Adrenal gland (tissue), 19 donors: ENCODE measurements at regions of chr1 and their contacts with region 1.

Region 1: DNA sequence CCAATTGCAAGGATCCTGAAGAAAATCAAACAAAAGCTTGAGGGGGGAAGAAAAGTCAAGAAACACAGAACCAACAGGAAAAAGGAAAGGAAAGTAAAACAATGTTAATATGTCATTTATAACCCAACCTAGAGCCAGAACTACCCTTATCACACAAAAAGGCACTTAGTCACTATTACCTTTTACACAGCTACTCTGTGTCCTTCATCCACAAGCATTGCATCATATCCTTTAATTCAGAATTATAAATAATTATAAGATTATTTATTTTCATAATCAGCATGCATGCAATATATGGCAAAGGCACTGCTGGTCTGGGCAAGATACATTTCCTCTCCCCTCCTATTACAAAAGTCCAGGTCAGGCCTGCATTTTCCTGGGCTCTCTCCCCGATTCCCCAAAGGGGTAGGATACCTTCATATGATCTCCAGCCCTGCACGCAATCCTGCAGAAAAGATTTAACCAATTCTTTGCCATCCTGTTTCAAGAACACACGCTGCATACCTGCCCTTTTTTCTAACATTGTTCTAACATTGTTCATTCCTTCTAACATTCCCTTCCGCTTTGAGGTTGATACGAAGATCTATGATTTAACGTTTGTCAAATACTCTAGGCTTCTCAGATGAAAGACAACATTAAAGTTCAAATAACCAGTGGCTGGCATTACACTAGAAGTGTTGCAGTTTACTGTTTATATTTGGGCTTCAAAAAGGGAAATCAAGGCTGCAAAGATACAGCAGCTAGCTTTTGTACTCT is 4.3 kb downstream of the PTPN14 start:
- DNase-seq: no peak
- H3K4me3 ChIP-seq: no peak overlapping the region
- H3K27ac ChIP-seq: peak overlapping the region; percentile 3 to 59 (median 41)
- H3K4me1 ChIP-seq: peaks cover 19 to 35% of the 10 kb centered on the region in 2 donors
- H3K27me3 ChIP-seq: no peaks in the 10 kb centered on the region
- CTCF ChIP-seq: no peak
- POLR2A ChIP-seq: no peak

Region 2: DNA sequence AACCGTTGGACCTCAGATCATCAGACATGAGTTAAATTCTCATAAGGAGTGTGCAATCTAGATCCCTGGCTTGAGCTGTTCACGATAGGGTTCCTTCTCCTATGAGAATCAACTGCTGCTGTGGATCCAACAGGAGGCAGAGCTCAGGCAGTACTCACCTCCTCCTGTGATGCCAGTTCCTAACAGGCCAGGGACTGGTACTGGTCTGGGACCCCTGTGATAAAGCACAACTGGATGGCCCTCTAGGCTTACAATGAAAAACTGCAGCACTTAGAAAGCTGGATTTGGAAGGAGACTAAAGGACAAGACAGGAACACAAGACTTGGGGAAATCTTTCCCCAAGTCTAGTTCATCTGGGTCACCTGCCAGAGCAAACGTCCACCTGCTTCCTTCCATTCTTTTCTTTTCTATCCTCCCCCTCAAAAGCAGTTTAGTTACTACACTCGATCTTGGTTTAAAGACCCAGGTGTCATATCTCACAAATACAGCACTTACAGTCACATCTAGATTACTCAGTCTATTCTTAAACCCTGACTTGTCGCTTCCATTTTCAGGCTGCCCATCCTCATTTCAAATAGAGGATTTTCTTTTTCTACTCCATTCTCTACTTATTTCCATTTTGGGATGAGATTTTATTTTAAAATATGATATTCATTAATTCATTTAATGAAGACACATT is 55.5 kb before region 1 on chr1:
- intact Hi-C with region 1: loop called in 1 of 2 experiments (anchors 2 kb)
- DNase-seq: no peak
- H3K4me3 ChIP-seq: no peak overlapping the region
- H3K27ac ChIP-seq: no peak overlapping the region
- H3K4me1 ChIP-seq: peaks cover 4 to 6% of the 10 kb centered on the region in 2 donors
- H3K27me3 ChIP-seq: no peaks in the 10 kb centered on the region
- CTCF ChIP-seq: no peak
- POLR2A ChIP-seq: no peak

Region 3: DNA sequence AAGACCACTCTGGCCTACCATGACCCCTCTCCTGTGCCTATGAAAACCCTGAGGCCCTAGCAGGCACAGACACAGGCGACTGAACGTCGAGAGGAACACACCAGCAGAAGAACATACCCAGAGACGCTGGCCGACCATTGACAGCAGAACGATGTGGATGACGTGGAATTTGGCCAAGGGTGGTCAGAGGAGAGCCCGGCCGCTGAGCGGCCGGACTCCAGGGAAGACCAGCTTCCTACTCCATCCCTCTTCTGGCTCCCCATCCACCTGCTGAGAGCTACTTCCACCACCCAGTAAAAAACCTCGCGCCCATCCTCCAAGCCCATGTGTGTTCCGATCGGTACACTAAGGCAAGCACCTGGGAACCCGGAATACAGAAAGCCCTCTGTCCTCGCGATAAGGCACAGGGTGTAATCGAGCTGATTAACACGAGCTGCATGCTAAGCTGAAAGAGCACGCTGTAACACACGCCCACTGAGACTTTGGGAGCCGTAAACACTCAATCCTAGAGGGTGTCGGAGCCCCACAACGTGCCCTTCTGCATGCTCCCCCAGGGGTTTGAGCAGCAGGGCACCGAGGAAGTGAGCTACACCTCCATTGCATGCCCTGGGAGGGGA is 206.3 kb after region 1 on chr1:
- intact Hi-C with region 1: no loop called
- DNase-seq: no peak
- H3K4me3 ChIP-seq: no peak overlapping the region
- H3K27ac ChIP-seq: no peak overlapping the region
- H3K4me1 ChIP-seq: no peaks in the 10 kb centered on the region
- H3K27me3 ChIP-seq: no peaks in the 10 kb centered on the region
- CTCF ChIP-seq: no peak
- POLR2A ChIP-seq: no peak